ENCODE measurements at regions of chr5 and their contacts with region 1.

Region 1: GRCh38 chr5:173625696-173626504 is 9.4 kb upstream of the BOD1 start:
- DNase-seq: no peak
- H3K4me3 ChIP-seq: no peak overlapping the region
- H3K27ac ChIP-seq: no peak overlapping the region
- H3K4me1 ChIP-seq: no peaks in the 10 kb centered on the region
- H3K27me3 ChIP-seq: no peaks in the 10 kb centered on the region
- CTCF ChIP-seq: no peak

Region 2: DNA sequence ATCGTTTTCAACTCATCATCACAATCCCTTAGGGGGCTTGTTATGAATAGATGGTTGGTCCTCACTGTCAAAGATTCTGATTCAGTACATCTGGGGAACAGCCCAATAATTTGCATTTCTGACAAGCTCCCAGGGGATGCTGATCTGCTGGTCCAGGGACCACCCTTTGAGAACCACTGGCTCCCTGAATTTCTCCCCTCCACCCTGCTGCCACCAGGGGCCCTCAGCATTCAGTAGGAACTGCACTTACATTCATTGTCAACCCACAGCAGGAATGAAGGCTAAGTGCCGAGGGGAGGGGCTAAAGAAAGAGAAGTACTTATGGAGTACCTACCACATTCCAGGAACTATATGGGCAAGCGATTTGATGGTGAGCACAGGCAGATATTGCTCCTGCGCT is 95.4 kb before region 1 on chr5:
- intact Hi-C with region 1: no loop called
- DNase-seq: no peak
- H3K4me3 ChIP-seq: no peak overlapping the region
- H3K27ac ChIP-seq: no peak overlapping the region
- H3K4me1 ChIP-seq: no peaks in the 10 kb centered on the region
- H3K27me3 ChIP-seq: no peaks in the 10 kb centered on the region
- CTCF ChIP-seq: no peak

Region 3: DNA sequence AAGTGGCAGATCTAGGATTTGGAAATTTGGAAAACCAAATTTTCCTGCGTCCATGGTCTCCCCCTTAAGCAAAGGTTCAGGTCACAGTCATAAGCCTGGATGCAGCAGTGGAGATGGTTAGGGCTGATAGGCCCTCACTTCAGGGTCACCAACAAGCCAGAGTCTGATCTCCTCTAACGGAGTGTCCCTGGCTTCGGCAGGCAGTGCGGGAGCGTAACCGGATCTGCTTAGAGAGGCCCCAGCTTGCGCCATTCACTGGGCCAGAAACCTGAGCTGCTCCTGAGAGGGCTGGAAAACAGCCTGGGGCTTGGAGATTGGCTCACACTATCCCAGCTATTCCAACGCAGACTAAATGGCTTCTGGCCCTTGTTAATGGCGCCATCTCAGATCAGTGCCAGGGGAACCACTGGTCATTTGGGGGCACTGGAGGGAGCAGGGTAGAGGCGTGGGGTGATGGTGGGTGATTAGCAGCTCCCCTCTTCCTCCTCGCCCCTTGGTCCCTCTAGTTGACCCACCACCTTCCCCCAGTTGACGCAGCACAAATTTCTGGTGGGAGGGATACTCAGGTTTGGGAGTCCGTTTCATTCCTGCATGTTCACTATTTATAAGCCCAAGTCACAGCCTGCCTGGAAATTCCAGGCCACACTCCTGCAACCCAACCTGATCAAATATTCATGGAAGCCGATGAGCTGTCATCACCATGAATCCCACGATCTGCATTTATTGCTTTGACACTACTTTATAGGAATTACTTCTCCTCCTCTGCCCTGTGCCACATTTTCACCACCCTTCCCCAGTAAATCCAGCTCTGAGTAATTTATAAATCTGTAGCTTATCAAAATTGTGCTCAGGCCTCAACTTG is 127.6 kb after region 1 on chr5:
- intact Hi-C with region 1: loop called (anchors 10 kb)
- DNase-seq: no peak
- H3K4me3 ChIP-seq: no peak overlapping the region
- H3K27ac ChIP-seq: no peak overlapping the region
- H3K4me1 ChIP-seq: no peaks in the 10 kb centered on the region
- H3K27me3 ChIP-seq: no peaks in the 10 kb centered on the region
- CTCF ChIP-seq: no peak

Measured in colonic mucosa (tissue), 4 donors.